Left ventricle myocardium inferior (tissue), 1 donor: ENCODE measurements at regions of chr6 and their contacts with region 1.

Region 1: GRCh38 chr6:115896538-115897129 is 164.1 kb downstream of the FRK start:
- DNase-seq: no peak
- H3K4me3 ChIP-seq: no peak overlapping the region
- H3K27ac ChIP-seq: no peak overlapping the region
- H3K4me1 ChIP-seq: no peaks in the 10 kb centered on the region
- H3K27me3 ChIP-seq: no peaks in the 10 kb centered on the region
- CTCF ChIP-seq: peak; percentile 74

Region 2: DNA sequence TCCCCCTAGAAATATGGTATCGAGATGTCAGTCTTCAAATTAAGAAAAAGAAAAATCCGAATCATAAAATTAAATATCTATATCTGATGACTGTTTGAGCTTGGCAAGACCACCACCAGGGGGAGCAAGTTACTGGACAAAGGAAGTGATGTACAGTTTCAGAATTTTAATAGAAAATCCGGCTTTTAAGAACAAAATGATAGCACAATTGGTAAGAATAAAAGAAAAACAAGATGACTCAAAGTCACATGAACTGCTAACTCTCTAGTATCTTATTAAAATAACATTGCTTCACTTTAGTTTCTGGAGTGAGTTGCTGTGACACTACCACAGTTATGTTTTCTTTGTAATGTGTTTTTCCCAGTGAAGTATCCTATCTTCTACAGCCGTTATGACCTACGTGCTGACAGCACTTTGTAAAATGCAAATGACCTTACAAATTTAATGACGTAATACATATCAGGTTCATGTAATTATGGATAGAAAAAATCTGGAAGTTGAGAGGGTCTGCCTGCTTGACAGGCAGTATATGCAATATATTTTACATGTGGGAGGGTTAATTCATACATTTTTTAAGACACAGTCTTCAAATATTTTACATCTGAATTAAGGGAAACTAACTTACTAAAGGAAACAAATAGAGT is 1148.5 kb before region 1 on chr6:
- intact Hi-C with region 1: loop called (anchors 10 kb)
- DNase-seq: no peak
- H3K4me3 ChIP-seq: no peak overlapping the region
- H3K27ac ChIP-seq: no peak overlapping the region
- H3K4me1 ChIP-seq: no peaks in the 10 kb centered on the region
- H3K27me3 ChIP-seq: no peaks in the 10 kb centered on the region
- CTCF ChIP-seq: peak; percentile 72

Region 3: GRCh38 chr6:115982453-115982852 is 85.8 kb after region 1 on chr6:
- intact Hi-C with region 1: no loop called
- DNase-seq: no peak
- H3K4me3 ChIP-seq: no peak overlapping the region
- H3K27ac ChIP-seq: no peak overlapping the region
- H3K4me1 ChIP-seq: no peaks in the 10 kb centered on the region
- H3K27me3 ChIP-seq: no peaks in the 10 kb centered on the region
- CTCF ChIP-seq: no peak

Region 4: DNA sequence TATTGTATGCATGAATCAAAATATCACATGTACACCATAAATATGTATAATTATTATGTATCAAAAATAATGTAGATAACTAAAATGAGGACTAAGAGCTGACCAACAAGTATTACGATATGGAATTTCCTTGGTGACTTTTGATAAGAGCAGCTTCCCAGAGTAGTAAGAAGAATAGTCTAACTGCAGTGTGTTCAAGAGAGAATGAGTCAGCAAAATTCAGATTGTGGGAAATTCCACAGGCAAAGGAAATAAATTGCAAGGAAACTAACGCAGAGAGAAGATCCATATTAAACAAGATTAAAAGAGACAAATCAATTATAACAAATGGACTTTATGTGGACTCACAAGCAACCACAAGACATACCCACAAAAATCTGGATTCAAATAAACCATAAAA is 137.7 kb after region 1 on chr6:
- intact Hi-C with region 1: no loop called
- DNase-seq: no peak
- H3K4me3 ChIP-seq: no peak overlapping the region
- H3K27ac ChIP-seq: no peak overlapping the region
- H3K4me1 ChIP-seq: peaks cover 44% of the 10 kb centered on the region
- H3K27me3 ChIP-seq: no peaks in the 10 kb centered on the region
- CTCF ChIP-seq: no peak